AG04449 (cell line): ENCODE measurements at regions of chr11 and their contacts with region 1.

Region 1: GRCh38 chr11:80155412-80156017 is 714.7 kb upstream of the TENM4 start:
- DNase-seq: no peak
- H3K4me3 ChIP-seq: no peak overlapping the region
- CTCF ChIP-seq: peak; percentile 55

Region 2: GRCh38 chr11:79708300-79708932 is 447.1 kb before region 1 on chr11:
- CTCF ChIA-PET with region 1: interaction called, 72 read pairs
- POLR2A ChIA-PET with region 1: no interaction called
- DNase-seq: peak; percentile 4
- H3K4me3 ChIP-seq: no peak overlapping the region
- CTCF ChIP-seq: peak; percentile 52

Region 3: DNA sequence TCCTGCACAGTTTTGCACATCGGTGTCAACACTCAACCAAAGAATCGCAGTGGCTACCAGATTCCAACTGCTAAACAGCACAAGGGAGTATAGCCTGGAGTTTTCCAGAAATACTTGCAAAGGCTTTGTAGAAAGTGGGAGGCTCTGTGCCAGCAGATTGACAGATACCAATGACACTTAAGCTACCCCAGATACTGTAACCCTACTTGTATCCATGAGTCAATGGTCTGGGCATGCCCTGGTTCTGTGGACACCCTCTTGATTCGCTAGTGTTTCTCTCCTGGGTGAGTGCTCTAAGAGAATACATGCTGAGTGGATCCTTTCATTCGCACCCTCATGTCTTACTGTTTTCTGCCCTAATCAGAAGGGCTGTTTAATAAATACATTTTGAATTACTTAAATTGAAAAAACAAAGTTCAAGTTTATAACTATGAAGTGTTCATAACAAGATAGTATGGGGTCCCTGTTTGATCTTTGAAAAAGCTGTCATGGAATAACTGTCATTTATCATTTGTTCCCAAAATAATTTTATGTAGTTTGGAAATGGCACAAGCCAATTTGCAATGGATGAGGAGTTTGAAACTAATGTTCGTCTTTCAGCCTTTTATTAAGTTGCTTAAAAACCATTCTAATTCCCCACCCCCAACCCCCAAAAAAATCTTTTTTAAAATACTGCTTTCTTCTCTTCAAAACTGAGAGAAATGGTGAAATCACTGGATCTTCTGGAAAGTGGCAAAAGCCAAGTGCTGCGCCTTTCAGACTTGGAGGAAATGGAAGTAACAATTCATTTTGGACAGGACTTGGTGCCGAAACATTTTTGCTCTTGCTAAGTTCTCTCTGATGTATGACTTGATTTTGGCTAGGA is 114.1 kb before region 1 on chr11:
- CTCF ChIA-PET with region 1: no interaction called
- POLR2A ChIA-PET with region 1: no interaction called
- DNase-seq: no peak
- H3K4me3 ChIP-seq: no peak overlapping the region
- CTCF ChIP-seq: no peak

Region 4: DNA sequence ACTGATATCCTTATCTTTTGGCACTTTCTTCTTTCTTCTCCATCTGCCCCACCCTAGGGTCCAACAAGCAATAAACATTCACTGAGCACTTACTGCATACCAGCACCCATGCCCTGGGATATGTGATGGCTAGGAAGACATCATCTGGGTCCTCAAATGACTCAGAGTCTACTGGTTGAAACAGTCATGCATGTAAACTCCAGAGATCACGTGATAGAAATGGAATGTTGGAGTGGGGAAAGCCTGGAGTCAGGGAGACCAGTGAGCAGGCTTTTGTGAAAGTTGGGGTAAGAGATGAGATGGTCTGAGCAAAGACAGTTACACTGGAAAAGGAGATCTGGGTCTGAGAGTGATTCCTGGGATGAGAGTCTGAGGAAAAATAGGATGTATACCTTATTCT is 10.2 kb after region 1 on chr11:
- CTCF ChIA-PET with region 1: interaction called, 10 read pairs
- POLR2A ChIA-PET with region 1: no interaction called
- DNase-seq: no peak
- H3K4me3 ChIP-seq: no peak overlapping the region
- CTCF ChIP-seq: no peak

Region 5: GRCh38 chr11:80414181-80415165 is 259.0 kb after region 1 on chr11:
- CTCF ChIA-PET with region 1: no interaction called
- POLR2A ChIA-PET with region 1: no interaction called
- DNase-seq: no peak
- H3K4me3 ChIP-seq: no peak overlapping the region
- CTCF ChIP-seq: no peak